MCF 10A (cell line): ENCODE measurements at regions of chr1 and their contacts with region 1.

Region 1: GRCh38 chr1:87131809-87132283 is 196.8 kb upstream of the LMO4 start:
- DNase-seq: peak; percentile 72
- H3K4me3 Mint-ChIP-seq: peak overlapping the region; percentile 66
- H3K27ac Mint-ChIP-seq: no peak overlapping the region
- H3K4me1 Mint-ChIP-seq: peaks cover 5% of the 10 kb centered on the region
- H3K27me3 Mint-ChIP-seq: no peaks in the 10 kb centered on the region
- CTCF ChIP-seq: peak; percentile 91

Region 2: GRCh38 chr1:86616871-86617270 is 515.0 kb before region 1 on chr1:
- CTCF ChIA-PET with region 1: no interaction called
- POLR2A ChIA-PET with region 1: no interaction called
- intact Hi-C with region 1: no loop called
- DNase-seq: peak; percentile 17
- H3K4me3 Mint-ChIP-seq: no peak overlapping the region
- H3K27ac Mint-ChIP-seq: no peak overlapping the region
- H3K4me1 Mint-ChIP-seq: no peaks in the 10 kb centered on the region
- H3K27me3 Mint-ChIP-seq: no peaks in the 10 kb centered on the region
- CTCF ChIP-seq: no peak

Region 3: GRCh38 chr1:87151500-87152421 is 19.9 kb after region 1 on chr1:
- CTCF ChIA-PET with region 1: interaction called, 12 read pairs
- POLR2A ChIA-PET with region 1: no interaction called
- intact Hi-C with region 1: no loop called
- DNase-seq: no peak
- H3K4me3 Mint-ChIP-seq: no peak overlapping the region
- H3K27ac Mint-ChIP-seq: no peak overlapping the region
- H3K4me1 Mint-ChIP-seq: peaks cover 7% of the 10 kb centered on the region
- H3K27me3 Mint-ChIP-seq: no peaks in the 10 kb centered on the region
- CTCF ChIP-seq: no peak

Region 4: DNA sequence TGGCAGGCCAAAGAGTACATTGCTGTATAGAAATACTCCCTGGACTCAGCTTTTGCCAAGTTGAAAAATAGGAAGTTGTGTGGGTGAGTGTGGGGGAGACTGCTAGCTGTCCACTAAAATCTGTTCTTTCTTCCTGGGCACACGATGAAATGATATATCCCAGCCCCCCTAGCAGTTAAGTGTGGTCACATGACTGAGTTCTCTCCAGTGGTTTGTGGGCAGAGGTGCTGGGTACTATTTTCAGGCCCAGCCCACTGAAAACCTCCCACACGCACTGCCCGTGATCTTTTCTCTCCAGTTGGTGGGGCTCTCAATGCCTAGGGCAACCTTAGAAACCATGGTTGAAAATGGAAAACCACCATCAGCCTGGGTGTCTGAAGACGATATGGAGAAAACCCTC is 77.1 kb after region 1 on chr1:
- CTCF ChIA-PET with region 1: no interaction called
- POLR2A ChIA-PET with region 1: no interaction called
- intact Hi-C with region 1: no loop called
- DNase-seq: no peak
- H3K4me3 Mint-ChIP-seq: no peak overlapping the region
- H3K27ac Mint-ChIP-seq: no peak overlapping the region
- H3K4me1 Mint-ChIP-seq: no peaks in the 10 kb centered on the region
- H3K27me3 Mint-ChIP-seq: no peaks in the 10 kb centered on the region
- CTCF ChIP-seq: no peak

Region 5: DNA sequence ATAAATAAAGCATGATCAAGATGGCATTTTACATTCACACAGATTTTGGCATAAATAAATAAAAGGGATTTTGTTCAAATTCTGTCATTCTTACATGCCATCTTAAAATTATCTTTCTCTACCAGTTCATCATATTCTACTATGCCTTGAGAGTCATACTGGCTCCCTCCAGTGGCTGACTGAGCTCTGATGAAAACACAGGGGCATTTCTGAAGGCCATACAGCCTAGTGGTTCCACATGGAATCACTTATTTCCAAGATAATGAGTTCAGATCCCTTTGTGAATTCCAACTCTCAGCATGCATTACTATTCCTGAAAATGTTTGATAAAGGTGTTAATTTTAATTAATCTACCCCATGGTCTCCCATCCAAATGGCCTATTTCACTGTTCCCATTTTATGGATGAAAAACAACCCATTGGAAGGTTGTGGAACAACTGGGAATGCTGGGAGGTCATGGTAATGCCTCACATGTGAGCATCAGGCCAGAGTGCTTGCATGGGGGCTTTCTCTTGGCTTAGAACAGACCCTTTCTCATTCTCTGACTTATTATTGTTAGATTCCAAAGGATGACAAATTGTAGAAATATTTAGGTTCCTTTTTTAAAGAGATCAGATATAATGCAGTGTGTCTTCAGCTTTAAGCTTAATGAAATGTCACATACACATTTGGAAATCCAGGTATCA is 929.8 kb after region 1 on chr1:
- CTCF ChIA-PET with region 1: no interaction called
- POLR2A ChIA-PET with region 1: no interaction called
- intact Hi-C with region 1: loop called (anchors 2 kb)
- DNase-seq: peak; percentile 70
- H3K4me3 Mint-ChIP-seq: no peak overlapping the region
- H3K27ac Mint-ChIP-seq: no peak overlapping the region
- H3K4me1 Mint-ChIP-seq: peaks cover 9% of the 10 kb centered on the region
- H3K27me3 Mint-ChIP-seq: no peaks in the 10 kb centered on the region
- CTCF ChIP-seq: peak; percentile 81

Region 6: GRCh38 chr1:88302843-88303486 is 1171.1 kb after region 1 on chr1:
- CTCF ChIA-PET with region 1: interaction called, 4 read pairs
- POLR2A ChIA-PET with region 1: no interaction called
- intact Hi-C with region 1: loop called (anchors 5 kb)
- DNase-seq: peak; percentile 29
- H3K4me3 Mint-ChIP-seq: no peak overlapping the region
- H3K27ac Mint-ChIP-seq: no peak overlapping the region
- H3K4me1 Mint-ChIP-seq: no peaks in the 10 kb centered on the region
- H3K27me3 Mint-ChIP-seq: peaks cover 27% of the 10 kb centered on the region
- CTCF ChIP-seq: peak; percentile 40